T-cell (primary cell): ENCODE measurements at regions of chr9 and their contacts with region 1.

Region 1: DNA sequence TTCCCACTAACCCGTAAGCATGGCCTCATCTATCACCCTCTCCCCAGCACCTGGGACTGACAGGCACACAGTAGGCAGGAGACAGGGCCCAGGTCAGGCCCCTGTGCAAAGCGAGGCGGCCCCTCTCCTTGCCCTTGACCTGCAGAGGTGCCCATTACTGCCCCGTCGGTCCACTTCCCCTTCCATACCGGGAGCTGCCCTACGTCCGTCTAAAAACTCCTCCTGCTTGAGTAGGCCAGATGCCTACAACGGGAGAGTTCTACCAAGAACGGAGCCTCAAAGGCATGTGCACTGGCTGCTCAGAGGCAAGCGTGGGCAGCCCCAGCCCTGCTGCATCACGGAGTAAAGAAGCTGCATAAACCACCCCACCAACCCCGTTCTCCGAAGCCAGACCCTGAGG is 4.6 kb upstream of the DPH7 start:
- DNase-seq: no peak
- ATAC-seq: no peak
- H3K4me3 ChIP-seq: no peak overlapping the region
- H3K4me3 Mint-ChIP-seq: no peak overlapping the region
- H3K27ac ChIP-seq: no peak overlapping the region
- H3K27ac Mint-ChIP-seq: no peak overlapping the region
- H3K4me1 ChIP-seq: peaks cover 0 to 12% of the 10 kb centered on the region in 2 experiments
- H3K4me1 Mint-ChIP-seq: peaks cover 6 to 17% (median 12%) of the 10 kb centered on the region in 3 donors
- H3K27me3 ChIP-seq: no peaks in the 10 kb centered on the region
- H3K27me3 Mint-ChIP-seq: no peaks in the 10 kb centered on the region

Region 2: GRCh38 chr9:137286975-137287383 is 296.4 kb before region 1 on chr9:
- CTCF ChIA-PET with region 1: no interaction called
- POLR2A ChIA-PET with region 1: no interaction called
- DNase-seq: peak in 2 of 35 experiments; percentile 34 to 48
- ATAC-seq: peak; percentile 52 to 75 (median 58)
- H3K4me3 ChIP-seq: no peak overlapping the region
- H3K4me3 Mint-ChIP-seq: no peak overlapping the region
- H3K27ac ChIP-seq: no peak overlapping the region
- H3K27ac Mint-ChIP-seq: no peak overlapping the region
- H3K4me1 ChIP-seq: no peaks in the 10 kb centered on the region
- H3K4me1 Mint-ChIP-seq: peaks cover 0 to 5% (median 2%) of the 10 kb centered on the region in 3 donors
- H3K27me3 ChIP-seq: peaks cover 0 to 20% of the 10 kb centered on the region in 2 experiments
- H3K27me3 Mint-ChIP-seq: peaks cover 6 to 10% of the 10 kb centered on the region in 2 donors

Region 3: DNA sequence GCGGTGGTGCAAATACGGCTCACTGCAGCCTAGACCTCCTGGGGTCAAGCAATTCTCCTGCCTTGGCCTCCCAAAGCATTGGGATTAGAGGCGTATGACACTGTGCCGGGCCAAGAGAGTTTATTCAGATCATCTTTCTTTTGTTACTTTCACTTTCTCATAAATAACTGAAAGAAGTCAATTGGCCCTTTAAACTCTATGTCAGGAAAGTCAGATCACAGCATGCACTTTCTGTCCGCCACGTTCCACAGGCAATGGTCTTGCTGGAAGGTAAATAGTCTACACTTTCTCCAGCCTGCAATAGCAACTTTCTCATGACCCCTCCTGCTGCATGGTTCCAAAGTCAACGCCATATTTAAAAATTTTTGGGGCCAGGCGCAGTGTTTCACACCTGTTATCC is 15.6 kb after region 1 on chr9:
- CTCF ChIA-PET with region 1: no interaction called
- POLR2A ChIA-PET with region 1: no interaction called
- DNase-seq: no peak
- ATAC-seq: no peak
- H3K4me3 ChIP-seq: no peak overlapping the region
- H3K4me3 Mint-ChIP-seq: no peak overlapping the region
- H3K27ac ChIP-seq: no peak overlapping the region
- H3K27ac Mint-ChIP-seq: no peak overlapping the region
- H3K4me1 ChIP-seq: peaks cover 0 to under 1% of the 10 kb centered on the region in 2 experiments
- H3K4me1 Mint-ChIP-seq: peaks cover 4 to 8% (median 8%) of the 10 kb centered on the region in 3 donors
- H3K27me3 ChIP-seq: no peaks in the 10 kb centered on the region
- H3K27me3 Mint-ChIP-seq: no peaks in the 10 kb centered on the region

Region 4: DNA sequence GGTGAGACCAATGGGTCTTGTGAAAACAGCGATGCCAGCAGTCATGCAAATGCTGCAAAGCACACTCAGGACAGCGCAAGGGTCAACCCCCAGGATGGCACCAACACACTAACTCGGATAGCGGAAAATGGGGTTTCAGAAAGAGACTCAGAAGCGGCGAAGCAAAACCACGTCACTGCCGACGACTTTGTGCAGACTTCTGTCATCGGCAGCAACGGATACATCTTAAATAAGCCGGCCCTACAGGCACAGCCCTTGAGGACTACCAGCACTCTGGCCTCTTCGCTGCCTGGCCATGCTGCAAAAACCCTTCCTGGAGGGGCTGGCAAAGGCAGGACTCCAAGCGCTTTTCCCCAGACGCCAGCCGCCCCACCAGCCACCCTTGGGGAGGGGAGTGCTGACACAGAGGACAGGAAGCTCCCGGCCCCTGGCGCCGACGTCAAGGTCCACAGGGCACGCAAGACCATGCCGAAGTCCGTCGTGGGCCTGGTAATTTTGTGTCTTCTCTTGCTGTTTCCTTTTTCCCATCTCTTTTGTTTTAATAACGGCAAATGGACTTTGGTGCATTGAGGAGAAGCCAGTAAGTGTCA is 133.4 kb after region 1 on chr9:
- CTCF ChIA-PET with region 1: no interaction called
- POLR2A ChIA-PET with region 1: interaction called in 1 of 2 experiments, 10 read pairs
- DNase-seq: no peak
- ATAC-seq: peak in 1 of 4 experiments; percentile 33
- H3K4me3 ChIP-seq: no peak overlapping the region
- H3K4me3 Mint-ChIP-seq: no peak overlapping the region
- H3K27ac ChIP-seq: peak overlapping the region; percentile 19
- H3K27ac Mint-ChIP-seq: peak overlapping the region; percentile 34 to 80
- H3K4me1 ChIP-seq: peaks cover 4 to 24% of the 10 kb centered on the region in 2 experiments
- H3K4me1 Mint-ChIP-seq: peaks cover 31 to 41% (median 39%) of the 10 kb centered on the region in 3 donors
- H3K27me3 ChIP-seq: no peaks in the 10 kb centered on the region
- H3K27me3 Mint-ChIP-seq: no peaks in the 10 kb centered on the region